CD14-positive monocyte (primary cell): ENCODE measurements at regions of chr16 and their contacts with region 1.

Region 1: GRCh38 chr16:4682616-4683254 is 10.6 kb upstream of the NUDT16L1 start:
- DNase-seq: peak; percentile 53 to 66 (median 66)
- H3K4me3 ChIP-seq: peak overlapping the region in 2 of 3 experiments; percentile 26 to 54
- H3K4me3 Mint-ChIP-seq: peak overlapping the region; percentile 54 to 70
- H3K27ac ChIP-seq: peak overlapping the region; percentile 60 to 94
- H3K27ac Mint-ChIP-seq: peak overlapping the region; percentile 82 to 96 (median 90)
- H3K4me1 ChIP-seq: peaks cover 46 to 48% of the 10 kb centered on the region in 2 donors
- H3K4me1 Mint-ChIP-seq: peaks cover 42% of the 10 kb centered on the region
- H3K27me3 ChIP-seq: no peaks in the 10 kb centered on the region
- H3K27me3 Mint-ChIP-seq: no peaks in the 10 kb centered on the region
- CTCF ChIP-seq: peak; percentile 77

Region 2: DNA sequence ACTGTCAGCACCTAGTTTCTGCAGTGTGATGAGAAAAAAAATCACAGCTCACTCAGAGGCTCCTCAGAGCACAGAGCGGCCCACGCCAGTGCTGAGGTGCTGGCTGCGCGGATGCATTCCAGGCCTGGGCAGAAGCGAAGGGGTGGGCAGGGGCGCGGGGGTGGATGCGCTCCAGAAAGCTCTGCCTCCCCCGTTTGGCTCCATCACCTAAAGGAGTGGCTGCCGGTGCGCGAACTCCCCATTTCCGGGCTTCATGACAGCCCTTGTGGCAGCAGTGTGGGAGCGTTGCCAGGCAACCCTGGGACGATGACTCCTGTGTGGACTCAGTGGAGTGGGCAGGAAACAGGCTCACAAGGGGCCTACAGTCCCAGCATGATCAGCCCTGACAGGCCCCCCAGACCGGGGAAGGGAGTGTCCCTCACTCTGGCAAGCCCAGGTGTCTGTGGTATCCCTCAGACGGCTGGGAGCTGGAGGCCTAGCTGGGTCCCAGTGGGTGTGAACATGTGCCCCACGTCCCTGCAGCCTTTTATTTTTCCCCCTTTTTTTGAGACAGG is 22.2 kb before region 1 on chr16:
- intact Hi-C with region 1: loop called in 1 of 2 experiments (anchors 2 kb)
- DNase-seq: no peak
- H3K4me3 ChIP-seq: no peak overlapping the region
- H3K4me3 Mint-ChIP-seq: no peak overlapping the region
- H3K27ac ChIP-seq: no peak overlapping the region
- H3K27ac Mint-ChIP-seq: no peak overlapping the region
- H3K4me1 ChIP-seq: peaks cover 36 to 47% of the 10 kb centered on the region in 2 donors
- H3K4me1 Mint-ChIP-seq: peaks cover 49% of the 10 kb centered on the region
- H3K27me3 ChIP-seq: no peaks in the 10 kb centered on the region
- H3K27me3 Mint-ChIP-seq: peaks cover 0 to 2% (median 0%) of the 10 kb centered on the region in 3 donors
- CTCF ChIP-seq: no peak